ENCODE measurements at regions of chr4 and their contacts with region 1.

Region 1: DNA sequence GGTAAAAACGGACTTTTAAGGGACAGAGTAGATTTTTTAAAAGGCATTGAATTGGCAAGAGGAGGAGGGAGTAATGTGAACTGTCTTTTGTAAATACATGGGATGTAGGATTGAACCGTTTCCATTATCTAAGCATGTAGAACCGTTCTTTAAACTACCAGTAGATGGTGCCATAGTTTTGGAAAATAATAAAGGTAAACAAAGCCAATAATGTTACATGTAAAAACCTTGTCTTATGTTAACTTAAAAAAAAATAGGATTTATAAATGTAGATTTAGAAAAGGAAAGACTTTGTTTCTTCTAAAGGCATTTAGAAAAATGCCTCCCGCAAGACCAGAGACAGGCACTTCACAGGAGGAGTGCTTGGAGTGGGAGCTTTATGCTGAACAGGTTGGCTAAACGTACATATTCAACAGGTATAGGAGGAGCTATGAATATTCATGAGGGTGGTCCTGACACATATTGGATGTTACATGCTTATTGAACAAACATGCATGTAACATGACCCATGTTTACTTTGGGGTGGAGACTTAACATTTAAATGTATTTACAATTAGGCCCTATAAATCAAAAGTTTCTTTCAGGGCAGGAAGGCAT is 45.5 kb upstream of the FAM241A start:
- DNase-seq: no peak
- ATAC-seq: peak; percentile 83
- H3K4me3 Mint-ChIP-seq: no peak overlapping the region
- H3K27ac Mint-ChIP-seq: no peak overlapping the region
- H3K4me1 Mint-ChIP-seq: peaks cover 13% of the 10 kb centered on the region
- H3K27me3 Mint-ChIP-seq: peaks cover 22% of the 10 kb centered on the region

Region 2: GRCh38 chr4:112145820-112146813 is 46.3 kb after region 1 on chr4:
- CTCF ChIA-PET with region 1: interaction called, 10 read pairs
- POLR2A ChIA-PET with region 1: no interaction called
- DNase-seq: peak; percentile 66
- ATAC-seq: peak; percentile 62
- H3K4me3 Mint-ChIP-seq: peak overlapping the region; percentile 83
- H3K27ac Mint-ChIP-seq: peak overlapping the region; percentile 85
- H3K4me1 Mint-ChIP-seq: peaks cover 35% of the 10 kb centered on the region
- H3K27me3 Mint-ChIP-seq: no peaks in the 10 kb centered on the region

Region 3: GRCh38 chr4:112214390-112215264 is 114.8 kb after region 1 on chr4:
- CTCF ChIA-PET with region 1: interaction called, 11 read pairs
- POLR2A ChIA-PET with region 1: no interaction called
- DNase-seq: no peak
- ATAC-seq: no peak
- H3K4me3 Mint-ChIP-seq: no peak overlapping the region
- H3K27ac Mint-ChIP-seq: no peak overlapping the region
- H3K4me1 Mint-ChIP-seq: peaks cover 5% of the 10 kb centered on the region
- H3K27me3 Mint-ChIP-seq: peaks cover 4% of the 10 kb centered on the region

Region 4: DNA sequence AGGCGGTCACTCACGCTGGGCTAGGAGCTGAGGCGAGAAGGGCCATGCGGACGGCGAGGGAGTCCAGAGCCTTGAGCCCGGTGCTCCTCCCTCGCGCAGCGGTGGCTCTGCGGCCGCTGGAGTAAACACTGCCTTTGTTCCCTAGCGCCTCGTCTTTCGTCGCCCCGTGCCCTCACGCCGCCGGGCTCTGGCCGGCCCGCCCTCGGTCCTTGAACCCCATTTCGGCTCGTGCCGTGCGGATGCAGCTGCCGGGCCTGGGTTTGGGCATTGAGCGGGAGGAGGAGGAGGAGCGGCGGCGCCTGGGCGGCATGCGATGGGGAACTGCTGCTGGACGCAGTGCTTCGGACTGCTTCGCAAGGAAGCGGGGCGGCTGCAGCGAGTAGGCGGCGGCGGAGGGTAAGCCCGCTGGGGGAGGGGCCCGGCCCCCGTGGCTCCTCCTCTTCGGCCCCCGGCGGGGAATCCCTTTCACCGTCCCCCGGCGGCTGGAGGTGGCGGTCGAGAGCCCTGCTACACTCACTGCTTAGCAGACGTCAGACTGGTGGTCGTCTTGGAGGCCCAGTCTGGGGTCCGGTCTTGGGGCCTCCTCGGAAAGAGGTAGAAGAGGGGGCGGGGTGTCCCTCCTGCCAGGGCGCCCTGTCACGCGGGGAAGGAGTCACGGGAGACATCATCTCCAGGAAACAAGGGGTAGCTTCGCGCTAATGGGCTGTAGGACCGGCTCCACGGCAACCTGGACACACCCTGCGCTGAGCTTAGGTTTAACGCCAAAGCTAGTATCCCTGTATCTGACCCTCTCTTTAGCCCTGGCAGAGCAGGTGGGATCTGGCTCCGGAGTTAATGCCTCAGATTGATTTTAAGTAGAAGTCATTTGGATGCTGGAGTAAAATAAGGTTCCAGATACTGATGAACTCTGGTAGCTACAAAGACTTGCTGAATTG is 132.2 kb after region 1 on chr4 and contains the start of gene AP1AR:
- CTCF ChIA-PET with region 1: interaction called, 88 read pairs
- POLR2A ChIA-PET with region 1: no interaction called
- DNase-seq: peak; percentile 85
- ATAC-seq: peak; percentile 72
- H3K4me3 Mint-ChIP-seq: peak within 1 kb of the TSS; percentile 84
- H3K27ac Mint-ChIP-seq: peak within 1 kb of the TSS; percentile 99
- H3K4me1 Mint-ChIP-seq: peaks cover 35% of the 10 kb centered on the region
- H3K27me3 Mint-ChIP-seq: peaks cover 3% of the 10 kb centered on the region
- total RNA-seq, gene AP1AR: 10.9 to 13.0 TPM

Region 5: DNA sequence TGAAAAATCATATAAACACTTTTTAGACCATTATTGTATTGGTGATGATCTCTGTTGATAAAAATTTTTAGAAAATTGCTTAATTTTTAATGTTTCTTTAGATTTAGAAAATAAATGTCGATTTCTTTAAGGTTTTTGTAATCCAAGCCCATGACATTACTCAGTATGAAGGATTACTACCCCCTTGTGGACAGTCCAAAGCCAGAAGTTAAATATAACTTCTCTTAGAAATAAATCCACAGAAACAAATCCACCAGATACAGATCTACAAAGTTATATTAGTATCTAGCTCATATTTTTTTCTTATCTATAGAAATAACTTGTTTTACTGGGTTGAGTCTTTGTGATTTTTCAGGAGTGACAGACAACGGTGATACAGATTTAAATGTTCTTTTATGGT is 167.0 kb after region 1 on chr4:
- CTCF ChIA-PET with region 1: interaction called, 14 read pairs
- POLR2A ChIA-PET with region 1: no interaction called
- DNase-seq: no peak
- ATAC-seq: no peak
- H3K4me3 Mint-ChIP-seq: no peak overlapping the region
- H3K27ac Mint-ChIP-seq: no peak overlapping the region
- H3K4me1 Mint-ChIP-seq: no peaks in the 10 kb centered on the region
- H3K27me3 Mint-ChIP-seq: no peaks in the 10 kb centered on the region

Region 6: GRCh38 chr4:112340027-112340426 is 240.2 kb after region 1 on chr4:
- CTCF ChIA-PET with region 1: no interaction called
- POLR2A ChIA-PET with region 1: no interaction called
- DNase-seq: no peak
- ATAC-seq: no peak
- H3K4me3 Mint-ChIP-seq: no peak overlapping the region
- H3K27ac Mint-ChIP-seq: no peak overlapping the region
- H3K4me1 Mint-ChIP-seq: no peaks in the 10 kb centered on the region
- H3K27me3 Mint-ChIP-seq: no peaks in the 10 kb centered on the region

Region 7: GRCh38 chr4:112523764-112524505 is 424.1 kb after region 1 on chr4:
- CTCF ChIA-PET with region 1: interaction called, 31 read pairs
- POLR2A ChIA-PET with region 1: no interaction called
- DNase-seq: peak; percentile 84
- ATAC-seq: peak; percentile 90
- H3K4me3 Mint-ChIP-seq: peak overlapping the region; percentile 70
- H3K27ac Mint-ChIP-seq: no peak overlapping the region
- H3K4me1 Mint-ChIP-seq: peaks cover 38% of the 10 kb centered on the region
- H3K27me3 Mint-ChIP-seq: peaks cover 64% of the 10 kb centered on the region

Measured in activated CD8-positive, alpha-beta T cell treated with anti-CD3 and anti-CD28 coated beads, Interleukin-2, amount 10 ng/mL, durations not matched to agents 7 days and 5 days (primary cell).